Endothelial cell of umbilical vein (primary cell): ENCODE measurements at regions of chr7 and their contacts with region 1.

Region 1: DNA sequence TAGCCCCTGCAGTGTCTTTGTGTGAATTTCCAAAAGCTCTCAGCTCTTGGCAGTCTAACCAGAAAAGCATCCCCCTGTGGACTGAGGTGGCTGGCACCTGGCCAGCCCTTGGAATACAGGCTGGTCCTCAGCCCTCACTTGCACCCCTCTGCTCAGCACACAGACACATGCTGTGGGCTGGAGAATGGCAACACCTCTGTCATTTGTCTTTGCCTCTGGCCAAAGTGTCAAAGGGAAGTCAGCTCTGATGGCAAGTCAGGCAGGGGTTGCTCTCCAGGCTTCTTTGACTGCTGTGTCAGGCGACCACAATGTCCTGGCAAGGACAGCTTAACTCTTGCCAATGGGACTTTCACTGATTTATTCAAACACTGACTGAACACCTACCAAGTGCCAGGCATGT is 724.8 kb downstream of the INHBA start:
- DNase-seq: no peak
- H3K4me3 ChIP-seq: no peak overlapping the region
- H3K27ac ChIP-seq: no peak overlapping the region
- H3K4me1 ChIP-seq: no peaks in the 10 kb centered on the region
- H3K27me3 ChIP-seq: no peaks in the 10 kb centered on the region
- CTCF ChIP-seq: no peak
- POLR2A ChIP-seq: no peak

Region 2: DNA sequence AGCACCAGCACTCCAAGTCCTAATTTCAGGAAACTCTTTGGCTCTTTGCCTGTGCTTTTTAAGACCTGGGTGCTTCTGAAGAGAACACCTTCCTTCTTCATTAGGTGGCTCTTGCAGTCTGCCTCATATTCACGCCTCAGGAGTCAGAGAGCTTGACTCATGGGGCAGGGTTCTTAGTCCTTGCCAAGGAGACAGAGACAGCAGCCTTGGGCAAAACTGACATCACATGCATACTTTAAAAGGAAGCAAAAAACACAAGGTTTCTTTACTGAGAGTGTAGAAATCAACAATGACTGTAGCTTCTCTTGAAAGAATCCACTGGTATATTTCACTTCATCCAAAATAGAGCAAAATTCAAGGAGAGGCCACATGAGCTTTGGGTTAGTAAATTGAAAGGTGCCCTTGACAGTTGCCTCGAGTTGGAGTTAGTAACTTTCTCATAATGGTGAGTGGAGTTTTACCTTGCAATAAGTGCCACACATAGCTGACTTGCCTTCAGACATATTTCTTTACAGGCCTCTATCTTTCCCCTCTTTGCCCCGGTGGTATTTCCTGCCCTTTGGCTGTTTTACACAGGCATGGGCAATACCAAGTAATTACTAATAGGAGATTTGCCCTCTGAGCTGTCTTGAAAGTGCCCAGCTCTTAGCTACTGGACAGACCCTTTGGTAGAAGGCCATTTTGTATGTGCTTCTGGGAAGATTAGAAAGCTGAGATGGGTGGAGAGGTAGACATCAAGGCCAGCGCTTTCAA is 55.6 kb before region 1 on chr7:
- CTCF ChIA-PET with region 1: no interaction called
- POLR2A ChIA-PET with region 1: no interaction called
- dilution Hi-C with region 1: no loop called
- intact Hi-C with region 1: loop called (anchors 5 kb)
- DNase-seq: no peak
- H3K4me3 ChIP-seq: no peak overlapping the region
- H3K27ac ChIP-seq: no peak overlapping the region
- H3K4me1 ChIP-seq: no peaks in the 10 kb centered on the region
- H3K27me3 ChIP-seq: no peaks in the 10 kb centered on the region
- CTCF ChIP-seq: no peak
- POLR2A ChIP-seq: no peak